Endothelial cell of umbilical vein (primary cell): ENCODE measurements at regions of chr1 and their contacts with region 1.

Region 1: GRCh38 chr1:101161619-101162018 is 75.2 kb upstream of the S1PR1 start:
- DNase-seq: peak; percentile 95
- H3K4me3 ChIP-seq: peak overlapping the region in 1 of 3 experiments; percentile 33
- H3K27ac ChIP-seq: peak overlapping the region; percentile 98
- H3K4me1 ChIP-seq: peaks cover 34% of the 10 kb centered on the region
- H3K27me3 ChIP-seq: no peaks in the 10 kb centered on the region
- CTCF ChIP-seq: no peak
- POLR2A ChIP-seq: no peak

Region 2: GRCh38 chr1:101004670-101005069 is 156.9 kb before region 1 on chr1:
- CTCF ChIA-PET with region 1: no interaction called
- POLR2A ChIA-PET with region 1: no interaction called
- dilution Hi-C with region 1: no loop called
- intact Hi-C with region 1: loop called (anchors 5 kb)
- DNase-seq: no peak
- H3K4me3 ChIP-seq: no peak overlapping the region
- H3K27ac ChIP-seq: no peak overlapping the region
- H3K4me1 ChIP-seq: peaks cover 38% of the 10 kb centered on the region
- H3K27me3 ChIP-seq: no peaks in the 10 kb centered on the region
- CTCF ChIP-seq: no peak
- POLR2A ChIP-seq: no peak

Region 3: DNA sequence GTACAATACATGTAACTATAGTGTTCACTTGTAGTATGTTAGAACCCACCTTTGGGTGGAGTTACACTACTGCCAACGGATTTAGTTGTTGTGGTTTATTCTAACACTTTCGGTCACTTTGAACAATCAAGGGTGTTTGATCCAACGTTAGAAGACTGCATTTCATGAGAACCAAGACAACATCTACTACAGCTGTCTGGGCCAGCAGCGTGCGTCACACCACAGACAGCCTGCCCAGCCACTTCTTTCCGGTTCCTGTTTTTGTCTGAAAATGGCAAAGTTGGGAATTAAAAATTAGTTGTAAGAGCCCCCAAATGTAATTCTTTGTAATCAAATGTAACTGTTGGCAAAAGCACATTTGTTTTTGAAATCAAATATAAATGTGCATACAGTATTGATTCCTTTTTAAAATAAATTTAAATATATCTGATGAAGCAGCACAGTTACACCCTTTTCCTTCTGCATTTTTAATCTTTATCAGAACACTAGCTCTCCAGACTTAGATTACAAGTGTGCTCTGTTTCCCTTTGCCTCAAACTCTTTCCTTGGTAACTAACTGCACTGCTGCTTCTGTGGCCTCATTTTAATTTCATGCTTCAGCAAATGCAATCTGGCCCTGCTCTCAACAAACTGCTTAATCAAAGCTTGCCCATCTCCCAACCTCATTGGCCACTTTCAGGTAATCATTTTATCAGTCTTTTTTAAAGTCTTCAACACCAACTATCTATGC is 49.4 kb before region 1 on chr1:
- CTCF ChIA-PET with region 1: no interaction called
- POLR2A ChIA-PET with region 1: no interaction called
- dilution Hi-C with region 1: no loop called
- intact Hi-C with region 1: loop called (anchors 1 kb)
- DNase-seq: peak; percentile 93
- H3K4me3 ChIP-seq: no peak overlapping the region
- H3K27ac ChIP-seq: peak overlapping the region; percentile 78
- H3K4me1 ChIP-seq: peaks cover 12% of the 10 kb centered on the region
- H3K27me3 ChIP-seq: no peaks in the 10 kb centered on the region
- CTCF ChIP-seq: no peak
- POLR2A ChIP-seq: no peak

Region 4: GRCh38 chr1:101136739-101137138 is 24.9 kb before region 1 on chr1:
- CTCF ChIA-PET with region 1: interaction called, 14 read pairs
- POLR2A ChIA-PET with region 1: no interaction called
- dilution Hi-C with region 1: no loop called
- intact Hi-C with region 1: no loop called
- DNase-seq: peak; percentile 91
- H3K4me3 ChIP-seq: no peak overlapping the region
- H3K27ac ChIP-seq: no peak overlapping the region
- H3K4me1 ChIP-seq: peaks cover 28% of the 10 kb centered on the region
- H3K27me3 ChIP-seq: no peaks in the 10 kb centered on the region
- CTCF ChIP-seq: peak; percentile 33 to 43
- POLR2A ChIP-seq: no peak

Region 5: DNA sequence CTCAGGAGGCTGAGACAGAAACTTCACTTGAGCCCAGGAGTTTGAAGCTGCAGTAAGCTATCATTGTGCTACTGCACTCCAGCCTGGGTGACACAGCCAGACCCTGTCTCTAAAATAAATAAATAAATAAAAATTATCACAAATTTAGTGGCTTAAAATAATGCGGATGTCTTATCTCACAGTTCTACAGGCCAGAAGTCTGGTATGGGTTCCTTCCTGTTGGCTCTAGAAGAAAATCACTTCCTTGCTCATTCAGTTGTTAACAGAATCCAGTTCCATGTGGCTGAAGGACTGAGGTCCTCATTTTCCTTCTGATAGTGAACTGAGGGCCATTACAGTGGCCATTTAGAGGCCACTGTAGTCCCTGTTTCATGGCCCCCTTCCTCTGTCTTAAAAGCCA is 19.4 kb before region 1 on chr1:
- CTCF ChIA-PET with region 1: interaction called, 14 read pairs
- POLR2A ChIA-PET with region 1: no interaction called
- dilution Hi-C with region 1: no loop called
- intact Hi-C with region 1: loop called (anchors 1 kb)
- DNase-seq: peak; percentile 41
- H3K4me3 ChIP-seq: no peak overlapping the region
- H3K27ac ChIP-seq: peak overlapping the region; percentile 50
- H3K4me1 ChIP-seq: peaks cover 31% of the 10 kb centered on the region
- H3K27me3 ChIP-seq: no peaks in the 10 kb centered on the region
- CTCF ChIP-seq: no peak
- POLR2A ChIP-seq: no peak

Region 6: DNA sequence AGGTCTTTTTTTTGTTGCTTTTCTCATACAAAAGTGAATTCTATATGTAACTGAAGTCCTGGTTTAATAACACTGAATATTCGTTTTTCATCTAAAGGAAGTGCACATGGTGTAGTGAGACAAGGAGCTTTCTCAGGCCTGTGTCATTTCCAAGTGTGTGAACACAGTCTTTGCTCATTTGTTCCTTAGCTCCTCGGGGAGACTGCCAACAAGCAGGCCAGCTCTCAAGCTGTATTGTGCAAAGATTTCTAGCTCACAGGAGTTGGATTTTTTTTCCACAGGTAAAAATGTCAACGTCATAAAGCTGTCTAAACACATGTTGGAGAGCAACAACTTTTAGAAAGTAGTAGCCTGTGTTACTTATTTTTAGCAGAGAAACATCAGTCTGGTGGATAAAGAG is 12.6 kb before region 1 on chr1:
- CTCF ChIA-PET with region 1: no interaction called
- POLR2A ChIA-PET with region 1: no interaction called
- dilution Hi-C with region 1: no loop called
- intact Hi-C with region 1: loop called (anchors 1 kb)
- DNase-seq: peak; percentile 84
- H3K4me3 ChIP-seq: no peak overlapping the region
- H3K27ac ChIP-seq: peak overlapping the region; percentile 19
- H3K4me1 ChIP-seq: peaks cover 30% of the 10 kb centered on the region
- H3K27me3 ChIP-seq: no peaks in the 10 kb centered on the region
- CTCF ChIP-seq: no peak
- POLR2A ChIP-seq: no peak

Region 7: DNA sequence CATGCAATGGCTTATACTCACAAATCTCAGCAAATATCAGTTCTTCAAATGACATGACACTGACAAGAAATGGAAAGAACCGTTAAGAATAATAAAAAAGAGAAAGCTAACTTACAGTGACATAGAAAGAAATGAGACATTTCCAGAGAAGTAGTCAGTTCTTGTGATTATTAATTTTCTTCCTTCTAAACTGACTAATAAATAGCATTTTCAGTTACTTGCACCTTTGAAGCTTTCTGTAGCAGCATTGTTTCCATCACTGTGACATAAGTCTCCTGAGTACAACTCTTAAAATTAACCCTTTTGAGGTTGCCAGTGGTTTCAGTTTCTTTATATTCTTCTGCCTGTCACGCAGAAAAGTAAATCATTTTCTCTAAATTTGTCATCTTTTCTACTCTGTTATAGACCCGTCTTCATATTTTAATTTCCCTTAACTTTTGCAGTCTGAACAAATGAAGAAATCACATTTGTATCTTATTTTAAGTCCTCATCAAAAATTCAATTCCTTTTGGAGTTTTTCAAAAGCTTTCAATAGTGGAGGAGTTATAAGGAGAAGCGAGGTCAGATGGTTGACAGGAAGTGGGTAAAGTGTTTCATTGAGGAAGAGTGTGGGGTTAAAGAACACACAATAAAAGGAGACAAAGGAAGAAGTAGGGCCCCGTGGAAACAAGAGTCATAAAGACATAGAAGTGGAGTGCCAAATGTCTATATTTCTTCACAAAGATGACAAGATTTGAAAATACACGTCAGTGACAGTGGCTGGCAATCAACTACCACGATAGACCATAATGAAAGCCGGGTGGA is 17.3 kb after region 1 on chr1:
- CTCF ChIA-PET with region 1: interaction called, 4 read pairs
- POLR2A ChIA-PET with region 1: no interaction called
- dilution Hi-C with region 1: no loop called
- intact Hi-C with region 1: loop called (anchors 1 kb)
- DNase-seq: no peak
- H3K4me3 ChIP-seq: no peak overlapping the region
- H3K27ac ChIP-seq: peak overlapping the region; percentile 9
- H3K4me1 ChIP-seq: peaks cover 62% of the 10 kb centered on the region
- H3K27me3 ChIP-seq: no peaks in the 10 kb centered on the region
- CTCF ChIP-seq: no peak
- POLR2A ChIP-seq: no peak

Region 8: DNA sequence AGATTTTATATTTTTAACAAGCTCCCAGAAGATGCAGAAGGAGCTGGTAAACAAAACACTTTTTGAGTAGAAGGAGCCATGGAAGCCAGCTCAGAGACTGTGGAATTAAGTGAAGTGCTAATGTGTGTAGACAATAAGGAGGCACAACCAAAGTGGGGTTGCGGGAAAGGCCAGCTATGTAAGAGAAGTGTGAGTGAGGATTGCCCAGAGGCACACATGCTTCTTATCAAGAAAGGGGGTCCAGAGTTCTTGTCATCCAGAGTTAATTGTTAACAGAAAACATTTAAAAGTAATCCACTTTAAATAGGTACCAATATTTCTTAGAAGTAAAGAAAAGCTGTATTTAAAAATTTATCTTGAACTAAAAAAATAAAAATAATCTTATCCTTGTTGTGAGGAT is 698.3 kb after region 1 on chr1:
- CTCF ChIA-PET with region 1: no interaction called
- POLR2A ChIA-PET with region 1: no interaction called
- dilution Hi-C with region 1: no loop called
- intact Hi-C with region 1: no loop called
- DNase-seq: no peak
- H3K4me3 ChIP-seq: no peak overlapping the region
- H3K27ac ChIP-seq: no peak overlapping the region
- H3K4me1 ChIP-seq: no peaks in the 10 kb centered on the region
- H3K27me3 ChIP-seq: no peaks in the 10 kb centered on the region
- CTCF ChIP-seq: no peak
- POLR2A ChIP-seq: no peak